HAP-1 (cell line): ENCODE measurements at regions of chr18 and their contacts with region 1.

Region 1: GRCh38 chr18:63439334-63439733 is 17.1 kb upstream of the VPS4B start:
- DNase-seq: peak; percentile 53 to 63
- H3K4me3 ChIP-seq: no peak overlapping the region
- H3K4me1 ChIP-seq: no peaks in the 10 kb centered on the region
- H3K27me3 ChIP-seq: peaks cover 2% of the 10 kb centered on the region; the same call in 1 of the 2 replicates

Region 2: DNA sequence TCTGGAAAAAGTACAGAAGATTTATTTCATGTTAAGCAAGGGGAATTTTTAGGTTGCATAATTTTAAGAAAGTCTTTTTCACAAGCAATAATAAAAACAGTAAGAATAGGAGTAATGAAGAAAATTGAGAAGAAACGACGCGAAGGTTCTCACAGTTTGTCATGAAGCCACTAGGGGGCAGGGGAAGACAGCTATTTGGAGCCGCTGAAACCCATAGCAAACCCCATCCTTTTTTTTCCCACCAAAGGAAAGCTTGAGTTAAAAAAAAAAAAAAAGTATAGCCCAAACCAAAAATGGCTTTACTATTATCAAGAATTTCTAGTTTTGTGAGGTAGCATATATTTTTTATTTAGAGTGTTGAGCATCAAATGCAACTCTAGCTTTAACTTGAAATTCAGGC is 423.1 kb before region 1 on chr18:
- in situ Hi-C with region 1: loop called (anchors 10 kb)
- DNase-seq: peak; percentile 68 to 71
- H3K4me3 ChIP-seq: no peak overlapping the region
- H3K4me1 ChIP-seq: no peaks in the 10 kb centered on the region
- H3K27me3 ChIP-seq: no peaks in the 10 kb centered on the region

Region 3: DNA sequence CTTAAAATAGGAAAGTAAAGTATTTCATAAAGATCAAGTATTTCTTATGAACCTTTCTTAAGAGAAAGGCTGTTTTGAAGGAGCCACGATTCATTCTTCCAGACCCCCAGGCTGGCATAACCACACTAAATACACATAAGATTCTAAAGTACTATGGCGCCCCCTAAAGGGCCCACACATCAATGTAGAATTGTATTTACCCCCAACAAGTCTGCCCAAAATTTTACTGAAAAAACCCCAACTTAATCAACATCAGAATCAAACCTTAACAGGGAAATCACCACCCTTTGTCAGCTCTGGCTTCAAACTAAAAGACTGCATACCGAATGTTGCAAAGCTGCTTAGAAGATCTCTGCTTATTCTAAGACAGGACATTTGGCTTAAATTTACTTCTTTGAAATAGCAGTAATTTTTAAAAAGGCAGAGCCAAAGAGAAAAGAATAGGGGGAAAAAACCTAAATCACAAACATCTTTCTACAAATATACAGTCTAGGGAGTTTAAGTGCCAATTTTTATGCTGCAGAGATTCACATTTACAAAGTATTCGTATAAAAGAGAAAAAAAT is 99.3 kb before region 1 on chr18:
- in situ Hi-C with region 1: loop called (anchors 10 kb)
- DNase-seq: peak; percentile 43 to 71
- H3K4me3 ChIP-seq: no peak overlapping the region
- H3K4me1 ChIP-seq: peaks cover 9% of the 10 kb centered on the region
- H3K27me3 ChIP-seq: no peaks in the 10 kb centered on the region